HepG2 (cell line): ENCODE measurements at regions of chr12 and their contacts with region 1.

Region 1: GRCh38 chr12:2783936-2784600 is 10.7 kb upstream of the FKBP4 start:
- DNase-seq: peak; percentile 23
- ATAC-seq: peak; percentile 97
- H3K4me3 ChIP-seq: no peak overlapping the region
- H3K27ac ChIP-seq: no peak overlapping the region
- H3K4me1 ChIP-seq: peaks cover 19% of the 10 kb centered on the region
- H3K27me3 ChIP-seq: peaks cover 1 to 34% of the 10 kb centered on the region in 2 experiments; a peak in 2 of 5 replicates
- CTCF ChIP-seq: peak; percentile 89
- EP300 ChIP-seq: no peak
- POLR2A ChIP-seq: no peak
- RAD21 ChIP-seq: no peak

Region 2: GRCh38 chr12:2739817-2740641 is 44.0 kb before region 1 on chr12:
- CTCF ChIA-PET with region 1: interaction called, 12 read pairs
- POLR2A ChIA-PET with region 1: no interaction called
- in situ Hi-C with region 1: loop called (anchors 5 kb)
- intact Hi-C with region 1: loop called (anchors 1 kb)
- DNase-seq: peak; percentile 32
- ATAC-seq: peak; percentile 53
- H3K4me3 ChIP-seq: no peak overlapping the region
- H3K27ac ChIP-seq: no peak overlapping the region
- H3K4me1 ChIP-seq: no peaks in the 10 kb centered on the region
- H3K27me3 ChIP-seq: peaks cover 1 to 21% of the 10 kb centered on the region in 2 experiments; a peak in 2 of 5 replicates
- CTCF ChIP-seq: peak; percentile 58
- EP300 ChIP-seq: no peak
- POLR2A ChIP-seq: no peak
- RAD21 ChIP-seq: peak; percentile 49